Transverse colon (tissue), 4 donors: ENCODE measurements at regions of chr12 and their contacts with region 1.

Region 1: GRCh38 chr12:122732170-122732569 is 1.5 kb upstream of the HCAR1 start:
- DNase-seq: no peak
- H3K4me3 ChIP-seq: no peak overlapping the region
- H3K27ac ChIP-seq: no peak overlapping the region
- H3K4me1 ChIP-seq: no peaks in the 10 kb centered on the region
- H3K27me3 ChIP-seq: no peaks in the 10 kb centered on the region
- CTCF ChIP-seq: no peak
- EP300 ChIP-seq: no peak
- POLR2A ChIP-seq: no peak

Region 2: DNA sequence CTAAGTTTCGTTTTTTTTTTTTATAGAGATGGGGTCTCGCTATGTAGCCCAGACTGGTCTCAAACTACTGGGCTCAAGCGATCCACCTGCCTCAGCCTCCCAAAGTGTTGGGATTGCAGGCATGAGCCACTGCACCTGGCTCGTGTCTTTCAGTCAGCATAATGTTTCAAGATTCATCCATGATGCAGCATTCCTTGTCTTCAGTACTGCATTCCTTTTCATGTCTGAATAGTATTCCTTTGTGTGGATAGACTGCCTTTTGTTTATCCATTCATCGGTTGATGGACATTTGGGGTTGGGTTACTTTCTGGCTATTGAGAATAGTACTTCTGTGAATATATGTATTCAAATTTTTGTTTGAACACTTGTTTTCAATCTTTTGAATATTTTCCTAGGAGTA is 66.4 kb before region 1 on chr12:
- in situ Hi-C with region 1: no loop called
- intact Hi-C with region 1: loop called (anchors 2 kb)
- DNase-seq: no peak
- H3K4me3 ChIP-seq: no peak overlapping the region
- H3K27ac ChIP-seq: no peak overlapping the region
- H3K4me1 ChIP-seq: no peaks in the 10 kb centered on the region
- H3K27me3 ChIP-seq: no peaks in the 10 kb centered on the region
- CTCF ChIP-seq: no peak
- EP300 ChIP-seq: no peak
- POLR2A ChIP-seq: no peak